Vagina (tissue), 2 donors: ENCODE measurements at regions of chr7 and their contacts with region 1.

Region 1: GRCh38 chr7:140653319-140654108 is 12.9 kb upstream of the DENND2A start:
- DNase-seq: no peak
- H3K4me3 ChIP-seq: no peak overlapping the region
- H3K27ac ChIP-seq: no peak overlapping the region
- H3K4me1 ChIP-seq: peaks cover 18% of the 10 kb centered on the region
- H3K27me3 ChIP-seq: no peaks in the 10 kb centered on the region
- CTCF ChIP-seq: peak; percentile 62 to 84 (median 79)
- POLR2A ChIP-seq: no peak

Region 2: GRCh38 chr7:140517546-140518369 is 135.8 kb before region 1 on chr7:
- intact Hi-C with region 1: loop called (anchors 5 kb)
- DNase-seq: peak in 1 of 2 donors; percentile 96
- H3K4me3 ChIP-seq: no peak overlapping the region
- H3K27ac ChIP-seq: peak overlapping the region; percentile 77
- H3K4me1 ChIP-seq: peaks cover 23% of the 10 kb centered on the region
- H3K27me3 ChIP-seq: no peaks in the 10 kb centered on the region
- CTCF ChIP-seq: peak; percentile 69 to 94 (median 84)
- POLR2A ChIP-seq: no peak

Region 3: DNA sequence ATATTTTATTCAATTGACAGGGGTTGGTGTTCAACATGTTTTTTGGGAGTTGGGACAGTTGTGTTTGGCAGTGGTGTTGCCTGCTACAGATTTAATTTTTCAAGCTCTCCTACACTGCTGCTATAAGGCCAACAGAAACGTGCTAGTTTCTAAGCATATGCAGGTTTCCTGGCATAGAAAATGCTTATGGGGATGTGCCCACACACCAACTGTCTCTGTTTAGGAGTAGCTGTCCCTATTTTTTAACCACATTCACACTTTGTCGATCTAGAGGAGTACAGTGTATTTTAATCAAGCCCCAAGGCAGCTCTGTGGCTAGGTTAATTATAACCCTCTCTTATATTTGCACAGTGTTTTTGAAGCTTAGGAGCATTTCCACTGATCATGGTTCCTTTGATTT is 448.9 kb after region 1 on chr7:
- intact Hi-C with region 1: no loop called
- DNase-seq: no peak
- H3K4me3 ChIP-seq: no peak overlapping the region
- H3K27ac ChIP-seq: no peak overlapping the region
- H3K4me1 ChIP-seq: no peaks in the 10 kb centered on the region
- H3K27me3 ChIP-seq: no peaks in the 10 kb centered on the region
- CTCF ChIP-seq: no peak
- POLR2A ChIP-seq: no peak